PC-9 (cell line): ENCODE measurements at regions of chr9 and their contacts with region 1.

Region 1: DNA sequence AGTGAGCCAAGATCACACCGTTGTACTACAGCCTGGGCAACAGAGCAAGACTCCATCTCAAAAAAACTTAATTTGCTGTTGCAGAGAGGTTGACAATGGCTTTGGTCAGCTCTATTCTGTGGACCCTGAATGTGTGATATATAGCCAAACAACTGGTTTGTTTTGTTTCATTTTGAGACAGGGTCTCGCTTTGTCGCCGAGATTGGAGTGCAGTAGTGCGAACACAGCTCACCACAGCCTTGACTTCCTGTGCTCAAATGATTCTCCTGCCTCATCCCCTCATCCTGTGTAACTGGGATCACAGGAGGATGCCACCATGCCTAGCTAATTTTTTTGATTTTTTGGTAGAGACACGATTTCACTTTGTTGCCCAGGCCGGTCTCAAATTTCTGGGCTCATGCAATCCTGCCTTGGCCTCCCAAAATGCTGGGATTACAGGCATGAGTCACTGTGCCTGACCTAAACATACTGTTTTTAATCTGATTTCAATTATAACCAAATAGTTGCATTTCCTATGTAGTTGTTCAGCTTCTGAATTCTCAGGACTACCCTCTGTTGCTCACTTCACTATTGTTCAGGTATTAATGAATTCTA is 9.8 kb downstream of the RNF183 start:
- DNase-seq: no peak
- H3K4me3 ChIP-seq: no peak overlapping the region
- H3K27ac ChIP-seq: no peak overlapping the region
- H3K4me1 ChIP-seq: no peaks in the 10 kb centered on the region
- H3K27me3 ChIP-seq: no peaks in the 10 kb centered on the region
- CTCF ChIP-seq: no peak

Region 2: DNA sequence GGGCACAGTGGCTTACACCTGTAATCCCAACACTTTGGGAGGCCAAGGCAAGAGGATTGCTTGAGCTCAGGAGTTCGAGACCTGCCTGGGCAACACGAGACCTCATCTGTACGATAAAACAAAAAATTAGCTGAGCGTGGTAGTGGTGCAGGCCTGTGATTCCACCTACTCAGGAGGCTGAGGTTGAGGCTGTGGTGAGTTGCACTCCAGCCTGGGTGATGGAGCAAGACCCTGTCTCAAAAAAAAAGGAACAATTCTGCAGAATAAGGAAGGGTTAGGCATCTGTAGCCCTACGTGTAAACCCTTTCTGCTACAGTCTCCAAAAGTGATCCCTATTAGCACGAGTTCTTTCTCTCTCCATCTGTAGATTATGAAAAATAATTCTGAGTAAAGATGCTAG is 37.9 kb before region 1 on chr9:
- CTCF ChIA-PET with region 1: no interaction called
- POLR2A ChIA-PET with region 1: interaction called, 10 read pairs
- intact Hi-C with region 1: no loop called
- DNase-seq: no peak
- H3K4me3 ChIP-seq: no peak overlapping the region
- H3K27ac ChIP-seq: no peak overlapping the region
- H3K4me1 ChIP-seq: no peaks in the 10 kb centered on the region
- H3K27me3 ChIP-seq: no peaks in the 10 kb centered on the region
- CTCF ChIP-seq: no peak

Region 3: DNA sequence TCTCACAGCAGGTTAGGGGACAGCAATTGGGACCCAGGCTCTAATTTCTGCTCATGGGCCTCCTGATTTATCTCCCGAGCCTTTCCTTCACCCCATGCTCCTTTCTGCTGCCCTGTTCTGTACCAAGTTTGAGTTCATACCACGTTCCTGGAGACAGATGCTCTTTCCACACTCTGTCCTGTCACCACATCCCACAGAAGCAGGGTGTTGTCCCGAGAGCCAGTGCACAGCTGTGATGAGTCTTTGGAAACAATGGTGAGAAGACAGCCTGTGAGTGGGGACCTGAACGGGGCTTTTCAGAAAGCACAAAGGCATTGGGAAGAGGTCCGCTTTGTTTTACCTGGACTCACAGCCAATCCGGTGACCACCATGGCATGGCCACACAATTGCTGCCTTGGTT is 29.3 kb after region 1 on chr9:
- CTCF ChIA-PET with region 1: no interaction called
- POLR2A ChIA-PET with region 1: no interaction called
- intact Hi-C with region 1: no loop called
- DNase-seq: no peak
- H3K4me3 ChIP-seq: no peak overlapping the region
- H3K27ac ChIP-seq: no peak overlapping the region
- H3K4me1 ChIP-seq: no peaks in the 10 kb centered on the region
- H3K27me3 ChIP-seq: no peaks in the 10 kb centered on the region
- CTCF ChIP-seq: no peak

Region 4: DNA sequence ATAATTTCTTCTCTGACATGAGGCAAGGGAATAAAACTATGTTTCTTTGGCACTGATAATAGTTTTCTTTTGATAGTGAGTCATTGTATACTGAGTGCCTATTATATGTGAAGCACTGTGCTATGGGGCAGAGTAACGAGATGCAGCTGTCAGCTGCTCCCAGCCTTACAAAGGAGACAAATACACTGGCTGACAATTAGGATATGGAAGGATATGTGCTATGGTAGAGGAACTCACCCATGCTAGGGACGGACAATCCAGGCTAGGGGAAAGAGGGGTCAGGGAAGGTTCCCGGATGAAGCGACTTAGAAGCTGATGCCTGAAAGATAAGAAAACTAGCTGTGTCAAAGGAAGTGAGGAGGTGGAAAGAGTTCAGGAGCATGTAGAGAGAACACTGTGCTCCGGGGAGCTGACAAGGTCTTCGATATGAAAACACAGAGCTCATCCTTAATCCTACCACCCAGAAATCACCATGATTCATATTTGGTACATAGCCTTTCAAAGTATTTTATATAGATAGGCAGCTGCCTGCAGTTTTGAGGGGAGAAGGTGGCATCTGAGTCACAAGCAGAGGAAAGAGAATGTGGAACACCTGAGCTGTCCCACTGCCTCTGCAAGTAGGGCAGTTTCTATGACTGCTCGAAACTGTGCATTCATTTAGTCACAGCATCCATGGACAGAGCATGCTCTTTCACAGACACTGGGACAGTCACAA is 68.1 kb after region 1 on chr9:
- CTCF ChIA-PET with region 1: no interaction called
- POLR2A ChIA-PET with region 1: interaction called, 11 read pairs
- intact Hi-C with region 1: no loop called
- DNase-seq: peak in 1 of 2 experiments; percentile 51
- H3K4me3 ChIP-seq: no peak overlapping the region
- H3K27ac ChIP-seq: 0 out of 2 replicates have a peak overlapping the region, but pooled peaks have one; percentile 2
- H3K4me1 ChIP-seq: peaks cover 19% of the 10 kb centered on the region
- H3K27me3 ChIP-seq: no peaks in the 10 kb centered on the region
- CTCF ChIP-seq: no peak

Region 5: GRCh38 chr9:113373676-113374392 is 80.5 kb after region 1 on chr9:
- CTCF ChIA-PET with region 1: no interaction called
- POLR2A ChIA-PET with region 1: no interaction called
- intact Hi-C with region 1: no loop called
- DNase-seq: no peak
- H3K4me3 ChIP-seq: no peak overlapping the region
- H3K27ac ChIP-seq: no peak overlapping the region
- H3K4me1 ChIP-seq: 0 out of 2 replicates have a peak, but pooled peaks cover 4% of the 10 kb centered on the region
- H3K27me3 ChIP-seq: no peaks in the 10 kb centered on the region
- CTCF ChIP-seq: no peak